ENCODE measurements at regions of chr15 and their contacts with region 1.

Region 1: DNA sequence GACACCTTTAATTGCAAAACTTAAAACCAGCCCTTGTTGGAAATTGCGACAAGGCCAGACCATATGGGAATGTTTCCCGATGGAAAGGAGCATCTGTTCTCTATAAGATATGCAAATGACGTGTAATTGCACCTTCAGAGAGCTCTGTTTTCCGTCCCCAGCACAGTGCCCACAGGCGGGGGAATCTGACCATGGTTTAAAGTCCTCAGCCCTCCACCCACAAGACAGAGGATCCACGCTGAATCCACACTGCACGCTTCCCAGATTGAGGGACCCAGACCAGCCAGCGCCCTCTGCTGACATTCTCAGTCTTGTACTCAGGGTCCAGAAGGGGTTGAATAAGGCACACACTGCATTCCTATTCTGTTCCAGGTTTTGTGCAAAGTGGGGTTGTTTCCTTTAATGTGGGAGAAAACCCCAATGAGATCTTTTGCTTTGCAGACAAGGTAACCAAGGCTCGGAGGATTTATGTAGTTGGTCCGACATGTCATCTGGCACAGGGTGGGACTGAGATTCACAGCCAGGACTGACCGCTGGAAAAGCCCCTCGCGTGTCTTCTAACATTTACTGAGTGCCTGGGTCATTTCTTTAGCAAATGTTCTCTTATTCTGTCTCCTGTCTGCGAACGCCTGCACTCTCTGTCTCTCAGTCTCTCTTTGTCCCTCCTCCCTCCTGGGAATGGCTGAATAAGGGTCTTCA is 36.8 kb upstream of the KLHL25 start:
- DNase-seq: peak; percentile 46 to 58
- ATAC-seq: peak; percentile 80 to 95
- H3K4me3 ChIP-seq: no peak overlapping the region
- H3K27ac ChIP-seq: no peak overlapping the region
- H3K4me1 ChIP-seq: no peaks in the 10 kb centered on the region
- H3K27me3 ChIP-seq: no peaks in the 10 kb centered on the region
- CTCF ChIP-seq: peak; percentile 55 to 74 (median 66)
- POLR2A ChIP-seq: no peak

Region 2: GRCh38 chr15:85306946-85307708 is 524.4 kb before region 1 on chr15:
- in situ Hi-C with region 1: loop called in 1 of 4 experiments (anchors 10 kb)
- intact Hi-C with region 1: no loop called
- DNase-seq: no peak
- ATAC-seq: no peak
- H3K4me3 ChIP-seq: no peak overlapping the region
- H3K27ac ChIP-seq: no peak overlapping the region
- H3K4me1 ChIP-seq: no peaks in the 10 kb centered on the region
- H3K27me3 ChIP-seq: no peaks in the 10 kb centered on the region
- CTCF ChIP-seq: no peak
- POLR2A ChIP-seq: no peak

Region 3: GRCh38 chr15:85707519-85708338 is 123.8 kb before region 1 on chr15:
- in situ Hi-C with region 1: no loop called
- intact Hi-C with region 1: no loop called
- DNase-seq: peak in 1 of 2 donors; percentile 56
- ATAC-seq: peak; percentile 76 to 84
- H3K4me3 ChIP-seq: peak overlapping the region; percentile 24 to 40 (median 29)
- H3K27ac ChIP-seq: peak overlapping the region; percentile 82 to 86 (median 84)
- H3K4me1 ChIP-seq: peaks cover 63% of the 10 kb centered on the region in 2 donors
- H3K27me3 ChIP-seq: no peaks in the 10 kb centered on the region
- CTCF ChIP-seq: peak in 1 of 5 experiments; percentile 9
- POLR2A ChIP-seq: peak in 1 of 2 donors; percentile 47

Region 4: GRCh38 chr15:85730001-85730820 is 101.4 kb before region 1 on chr15:
- in situ Hi-C with region 1: loop called in 3 of 4 experiments (anchors 5 to 10 kb)
- intact Hi-C with region 1: loop called (anchors 1 kb)
- DNase-seq: no peak
- ATAC-seq: peak; percentile 45 to 65
- H3K4me3 ChIP-seq: no peak overlapping the region
- H3K27ac ChIP-seq: peak overlapping the region; percentile 53 to 82 (median 63)
- H3K4me1 ChIP-seq: peaks cover 4 to 9% of the 10 kb centered on the region in 2 donors
- H3K27me3 ChIP-seq: no peaks in the 10 kb centered on the region
- CTCF ChIP-seq: peak; percentile 73 to 82 (median 76)
- POLR2A ChIP-seq: no peak

Region 5: DNA sequence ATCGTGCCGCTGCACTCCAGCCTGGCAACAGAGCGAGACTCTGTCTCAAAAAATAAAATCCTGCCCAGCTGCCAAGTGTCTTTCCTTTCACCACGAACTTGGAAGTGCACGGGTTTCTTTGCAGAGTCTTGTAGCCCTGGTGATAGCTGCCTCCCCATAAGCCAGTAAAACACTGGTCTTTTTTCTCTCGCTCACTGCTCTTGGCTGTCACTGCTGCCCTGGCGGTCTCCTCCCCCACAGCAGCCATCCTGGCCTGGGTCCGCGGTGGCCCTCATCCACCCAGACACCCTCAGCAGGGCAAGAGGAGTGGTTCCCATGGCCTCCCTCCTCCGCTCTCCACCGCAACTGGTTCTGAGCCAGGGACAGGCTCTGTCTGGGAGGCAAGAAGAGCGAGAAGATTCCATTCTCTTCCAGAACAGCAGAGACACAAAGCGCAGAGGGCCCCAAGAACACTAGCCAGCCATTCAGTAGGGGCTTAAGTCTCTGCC is 81.2 kb before region 1 on chr15:
- in situ Hi-C with region 1: no loop called
- intact Hi-C with region 1: loop called (anchors 5 kb)
- DNase-seq: peak; percentile 44 to 72
- ATAC-seq: peak; percentile 78 to 79
- H3K4me3 ChIP-seq: peak overlapping the region; percentile 35 to 45 (median 40)
- H3K27ac ChIP-seq: peak overlapping the region; percentile 80 to 84 (median 81)
- H3K4me1 ChIP-seq: peaks cover 38 to 41% of the 10 kb centered on the region in 2 donors
- H3K27me3 ChIP-seq: no peaks in the 10 kb centered on the region
- CTCF ChIP-seq: no peak
- POLR2A ChIP-seq: no peak

Measured in gastrocnemius medialis (tissue), 4 donors.